GM23248 (cell line): ENCODE measurements at regions of chr6 and their contacts with region 1.

Region 1: DNA sequence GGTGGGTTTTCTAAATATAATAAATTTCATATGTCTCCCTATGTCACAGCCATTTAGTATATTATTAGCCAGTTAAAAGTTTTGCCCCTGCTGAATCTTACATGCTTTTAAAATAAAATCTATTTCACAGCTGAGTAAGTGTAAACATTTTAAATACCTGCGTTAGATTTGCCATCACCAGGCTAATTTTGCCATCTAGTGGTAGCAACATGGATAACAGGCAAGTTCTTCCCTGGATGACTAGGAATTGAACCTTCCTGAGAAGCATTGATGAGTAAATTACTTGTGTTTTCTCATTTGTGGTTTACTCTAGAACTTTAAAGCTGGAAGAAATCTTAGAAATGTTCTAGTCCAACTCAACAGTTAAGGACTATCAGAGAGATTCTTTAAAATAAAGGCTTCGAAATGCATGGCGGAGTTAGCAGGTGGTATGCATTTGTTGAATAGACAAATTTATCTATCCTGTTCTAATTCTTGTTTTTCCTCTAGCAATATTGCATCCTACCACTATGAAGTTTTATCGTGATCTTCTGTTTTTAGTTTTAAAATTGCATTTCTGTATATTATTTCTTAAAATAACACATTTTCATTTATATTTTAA is 2.6 kb downstream of the PRSS35 start:
- DNase-seq: peak; percentile 67
- H3K4me3 ChIP-seq: no peak overlapping the region
- H3K27ac ChIP-seq: no peak overlapping the region
- H3K4me1 ChIP-seq: peaks cover 14% of the 10 kb centered on the region
- H3K27me3 ChIP-seq: no peaks in the 10 kb centered on the region

Region 2: GRCh38 chr6:83067448-83068413 is 447.2 kb before region 1 on chr6 and contains the start of gene DOP1A:
- in situ Hi-C with region 1: loop called (anchors 10 kb)
- DNase-seq: peak; percentile 99
- H3K4me3 ChIP-seq: peak within 1 kb of the TSS; percentile 89
- H3K27ac ChIP-seq: peak within 1 kb of the TSS; percentile 23; the same call in 1 of the 2 replicates
- H3K4me1 ChIP-seq: peaks cover 15% of the 10 kb centered on the region
- H3K27me3 ChIP-seq: no peaks in the 10 kb centered on the region
- total RNA-seq, gene DOP1A: 9.4 and 18.2 TPM in 2 replicates

Region 3: GRCh38 chr6:83221889-83222479 is 293.0 kb before region 1 on chr6:
- in situ Hi-C with region 1: loop called (anchors 5 kb)
- DNase-seq: peak; percentile 58
- H3K4me3 ChIP-seq: no peak overlapping the region
- H3K27ac ChIP-seq: no peak overlapping the region
- H3K4me1 ChIP-seq: no peaks in the 10 kb centered on the region
- H3K27me3 ChIP-seq: no peaks in the 10 kb centered on the region

Region 4: GRCh38 chr6:83804886-83805285 is 289.9 kb after region 1 on chr6:
- in situ Hi-C with region 1: no loop called
- DNase-seq: no peak
- H3K4me3 ChIP-seq: no peak overlapping the region
- H3K27ac ChIP-seq: no peak overlapping the region
- H3K4me1 ChIP-seq: no peaks in the 10 kb centered on the region
- H3K27me3 ChIP-seq: no peaks in the 10 kb centered on the region; the same call in none of the 2 replicates